ENCODE measurements at regions of chr4 and their contacts with region 1.

Region 1: DNA sequence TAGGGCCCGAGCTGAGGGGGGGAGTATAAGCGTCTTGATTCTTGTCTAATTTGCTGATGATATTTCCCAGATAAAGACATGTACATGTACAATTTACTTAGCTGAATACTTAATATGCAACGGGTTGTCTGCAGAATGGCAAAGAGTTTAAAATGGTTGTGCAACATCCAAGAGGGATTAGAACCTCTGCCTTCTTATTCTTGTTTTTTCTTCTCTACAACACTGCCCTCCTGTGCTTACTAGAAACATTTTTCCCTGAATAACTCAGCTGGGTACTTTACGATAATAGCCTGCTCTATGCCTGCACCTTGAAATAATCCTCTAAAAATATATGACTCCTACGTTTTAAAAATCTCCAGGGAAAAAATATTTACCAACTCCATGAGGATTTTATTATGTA is 41.8 kb downstream of the INTS12 start:
- DNase-seq: no peak
- ATAC-seq: peak; percentile 85
- H3K4me3 Mint-ChIP-seq: no peak overlapping the region
- H3K27ac Mint-ChIP-seq: no peak overlapping the region
- H3K4me1 Mint-ChIP-seq: no peaks in the 10 kb centered on the region
- H3K27me3 Mint-ChIP-seq: no peaks in the 10 kb centered on the region
- CTCF ChIP-seq: no peak

Region 2: DNA sequence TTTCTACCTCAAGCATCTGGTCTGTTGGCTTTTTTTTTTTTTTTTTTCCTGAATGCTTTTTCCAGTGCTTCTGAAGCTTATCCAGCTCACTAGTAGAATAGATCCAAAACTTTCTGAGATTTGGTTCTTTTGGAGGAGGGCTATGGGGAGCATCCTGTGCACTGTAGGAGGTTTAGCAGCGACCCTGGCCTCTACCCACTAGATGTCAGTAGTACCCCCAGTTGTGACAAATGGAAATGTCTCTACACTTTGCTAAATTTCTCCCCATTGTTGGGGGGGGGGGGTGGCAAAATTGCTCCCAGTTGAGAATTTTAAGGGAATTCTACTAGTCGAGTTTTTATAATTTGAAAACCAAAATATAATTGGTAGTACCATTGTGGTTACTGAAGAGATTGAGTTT is 169.8 kb before region 1 on chr4:
- CTCF ChIA-PET with region 1: interaction called, 10 read pairs
- POLR2A ChIA-PET with region 1: no interaction called
- DNase-seq: peak; percentile 14
- ATAC-seq: peak; percentile 74
- H3K4me3 Mint-ChIP-seq: no peak overlapping the region
- H3K27ac Mint-ChIP-seq: no peak overlapping the region
- H3K4me1 Mint-ChIP-seq: no peaks in the 10 kb centered on the region
- H3K27me3 Mint-ChIP-seq: no peaks in the 10 kb centered on the region; the same call in none of the 2 replicates
- CTCF ChIP-seq: no peak

Region 3: GRCh38 chr4:105520817-105521790 is 145.6 kb before region 1 on chr4:
- CTCF ChIA-PET with region 1: interaction called, 28 read pairs
- POLR2A ChIA-PET with region 1: no interaction called
- DNase-seq: peak; percentile 27
- ATAC-seq: peak; percentile 81
- H3K4me3 Mint-ChIP-seq: no peak overlapping the region
- H3K27ac Mint-ChIP-seq: no peak overlapping the region
- H3K4me1 Mint-ChIP-seq: no peaks in the 10 kb centered on the region
- H3K27me3 Mint-ChIP-seq: peaks cover 3% of the 10 kb centered on the region; the same call in 1 of the 2 replicates
- CTCF ChIP-seq: peak; percentile 36; the same call in 1 of the 2 replicates

Region 4: DNA sequence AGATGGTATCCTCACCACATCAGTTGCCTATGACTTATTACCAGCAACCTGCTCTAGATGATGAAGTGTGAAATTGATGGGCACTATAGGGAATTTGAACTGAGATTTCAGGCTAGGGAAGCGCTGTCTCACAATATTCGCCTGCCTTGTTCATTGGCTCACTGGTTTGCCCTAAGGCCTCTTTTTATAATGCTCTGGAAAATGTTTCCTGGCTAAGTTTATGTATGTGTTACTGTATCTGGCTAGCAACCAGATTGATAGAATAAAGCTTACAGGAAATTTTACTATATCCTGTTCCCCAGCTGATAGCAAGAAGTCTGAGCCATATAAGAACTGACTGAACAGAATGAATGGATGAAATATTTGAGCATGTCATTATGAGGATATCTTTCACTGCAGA is 113.5 kb after region 1 on chr4:
- CTCF ChIA-PET with region 1: no interaction called
- POLR2A ChIA-PET with region 1: no interaction called
- DNase-seq: no peak
- ATAC-seq: no peak
- H3K4me3 Mint-ChIP-seq: no peak overlapping the region
- H3K27ac Mint-ChIP-seq: no peak overlapping the region
- H3K4me1 Mint-ChIP-seq: no peaks in the 10 kb centered on the region
- H3K27me3 Mint-ChIP-seq: no peaks in the 10 kb centered on the region; the same call in 1 of the 2 replicates
- CTCF ChIP-seq: no peak